Activated B cell treated with CpG ODN at 0.5 μM for 24 hours (primary cell): ENCODE measurements at regions of chr1 and their contacts with region 1.

Region 1: GRCh38 chr1:37602750-37603694 is 7.3 kb upstream of the GNL2 start:
- DNase-seq: no peak
- ATAC-seq: peak; percentile 82
- H3K4me3 Mint-ChIP-seq: no peak overlapping the region
- H3K27ac Mint-ChIP-seq: no peak overlapping the region
- H3K4me1 Mint-ChIP-seq: peaks cover 4% of the 10 kb centered on the region
- H3K27me3 Mint-ChIP-seq: peaks cover 20% of the 10 kb centered on the region
- CTCF ChIP-seq: no peak

Region 2: GRCh38 chr1:37676281-37677243 is 73.5 kb after region 1 on chr1:
- CTCF ChIA-PET with region 1: interaction called, 181 read pairs
- POLR2A ChIA-PET with region 1: interaction called, 9 read pairs
- intact Hi-C with region 1: no loop called
- DNase-seq: no peak
- ATAC-seq: peak; percentile 54
- H3K4me3 Mint-ChIP-seq: peak overlapping the region; percentile 59
- H3K27ac Mint-ChIP-seq: peak overlapping the region; percentile 92
- H3K4me1 Mint-ChIP-seq: peaks cover 28% of the 10 kb centered on the region
- H3K27me3 Mint-ChIP-seq: peaks cover 4% of the 10 kb centered on the region
- CTCF ChIP-seq: no peak

Region 3: GRCh38 chr1:37682334-37682987 is 79.4 kb after region 1 on chr1:
- CTCF ChIA-PET with region 1: interaction called, 181 read pairs
- POLR2A ChIA-PET with region 1: interaction called, 9 read pairs
- intact Hi-C with region 1: loop called (anchors 1 kb)
- DNase-seq: peak; percentile 59
- ATAC-seq: peak; percentile 96
- H3K4me3 Mint-ChIP-seq: no peak overlapping the region
- H3K27ac Mint-ChIP-seq: peak overlapping the region; percentile 77
- H3K4me1 Mint-ChIP-seq: peaks cover 6% of the 10 kb centered on the region
- H3K27me3 Mint-ChIP-seq: no peaks in the 10 kb centered on the region
- CTCF ChIP-seq: peak; percentile 91

Region 4: DNA sequence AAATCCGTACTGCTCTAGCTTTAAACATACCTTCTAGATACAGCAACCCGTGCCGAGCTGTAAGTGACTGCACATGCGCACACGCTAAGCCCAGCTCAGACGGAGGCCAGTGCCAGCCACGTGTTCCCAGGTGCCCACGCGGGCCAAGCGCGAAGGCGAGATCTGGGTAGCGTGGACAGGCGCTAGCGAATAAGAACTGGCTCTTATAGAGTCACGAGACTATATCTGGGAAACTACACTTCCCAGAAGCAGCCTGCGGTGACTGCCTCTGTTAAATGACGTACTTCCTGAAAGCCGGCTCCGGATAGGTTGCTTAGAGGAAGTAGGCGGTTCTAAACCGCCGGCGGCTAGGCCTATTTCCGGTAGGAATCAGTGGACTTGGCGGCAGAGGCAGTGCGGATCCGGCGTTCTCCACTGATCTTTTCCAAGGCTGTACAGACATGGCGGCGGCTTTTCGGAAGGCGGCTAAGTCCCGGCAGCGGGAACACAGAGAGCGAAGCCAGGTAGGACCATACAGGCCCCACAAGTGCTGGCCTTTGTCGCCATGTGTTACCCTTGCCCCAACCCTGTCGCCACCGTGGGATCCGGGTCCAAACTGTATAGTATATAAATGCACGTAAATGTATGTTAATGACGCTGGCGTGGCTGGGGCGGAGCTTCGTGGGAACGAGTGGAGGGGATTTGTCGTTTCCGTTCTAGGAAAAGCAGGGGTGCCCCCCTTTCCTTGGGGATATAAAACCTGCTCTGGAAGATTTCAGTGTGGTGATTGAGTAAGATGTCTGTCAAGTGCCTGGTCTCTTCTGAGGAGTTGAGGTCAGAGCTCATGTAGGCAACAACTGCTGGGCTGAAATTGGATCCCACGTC is 409.6 kb after region 1 on chr1 and contains the start of gene UTP11:
- CTCF ChIA-PET with region 1: no interaction called
- POLR2A ChIA-PET with region 1: no interaction called
- intact Hi-C with region 1: loop called (anchors 10 kb)
- DNase-seq: peak; percentile 74
- ATAC-seq: peak; percentile 97
- H3K4me3 Mint-ChIP-seq: peak within 1 kb of the TSS; percentile 100
- H3K27ac Mint-ChIP-seq: peak within 1 kb of the TSS; percentile 94
- H3K4me1 Mint-ChIP-seq: peaks cover 27% of the 10 kb centered on the region
- H3K27me3 Mint-ChIP-seq: no peaks in the 10 kb centered on the region
- CTCF ChIP-seq: no peak
- total RNA-seq, gene UTP11: 26.1 and 28.6 TPM in 2 replicates

Region 5: GRCh38 chr1:38834937-38835827 is 1232.2 kb after region 1 on chr1:
- CTCF ChIA-PET with region 1: no interaction called
- POLR2A ChIA-PET with region 1: no interaction called
- intact Hi-C with region 1: loop called (anchors 1 kb)
- DNase-seq: no peak
- ATAC-seq: peak; percentile 82
- H3K4me3 Mint-ChIP-seq: no peak overlapping the region
- H3K27ac Mint-ChIP-seq: no peak overlapping the region
- H3K4me1 Mint-ChIP-seq: peaks cover 7% of the 10 kb centered on the region
- H3K27me3 Mint-ChIP-seq: peaks cover 10% of the 10 kb centered on the region
- CTCF ChIP-seq: no peak